ENCODE measurements at regions of chr14 and their contacts with region 1.

Region 1: DNA sequence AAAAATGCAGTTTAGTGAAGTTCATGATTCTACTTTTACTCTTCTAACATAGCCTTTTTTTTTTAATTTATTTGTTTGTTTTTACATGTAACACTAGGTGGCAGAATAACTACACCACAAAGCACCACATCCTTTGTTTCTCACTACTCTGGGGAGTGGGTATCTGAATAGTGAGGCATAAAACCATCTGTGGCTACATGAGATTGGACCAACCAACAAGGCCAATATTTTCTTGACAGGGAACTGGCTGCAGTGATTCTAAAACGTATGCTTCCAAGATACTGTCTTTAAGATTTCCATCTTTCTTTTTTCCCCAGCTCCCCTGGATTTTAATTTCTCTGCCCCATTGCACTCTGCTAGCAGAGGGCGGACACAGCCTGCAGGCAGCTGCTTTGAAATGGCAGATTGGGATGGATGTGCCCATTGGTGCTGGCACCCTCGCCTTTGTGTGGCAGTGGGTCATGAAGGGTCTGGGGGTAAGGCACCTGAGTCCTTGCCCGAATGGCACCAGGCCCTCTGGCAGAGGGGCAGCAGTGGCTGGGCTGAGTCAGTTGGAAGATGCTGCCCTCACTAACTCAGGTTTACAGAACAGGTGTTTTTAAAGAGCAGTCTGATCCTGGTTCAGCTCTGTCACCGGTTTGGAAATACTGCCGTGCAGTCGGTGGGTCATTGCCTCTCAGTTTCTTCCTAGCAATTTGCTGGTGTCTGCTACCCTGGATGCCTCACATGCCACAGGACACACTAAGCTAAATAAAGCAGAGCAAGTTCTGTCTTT is 429.1 kb downstream of the RAD51B start:
- DNase-seq: peak in 5 of 6 donors; percentile 37 to 61 (median 46)
- ATAC-seq: peak; percentile 68 to 83 (median 81)
- H3K4me3 ChIP-seq: no peak overlapping the region
- H3K27ac ChIP-seq: peak overlapping the region; percentile 6 to 88 (median 50)
- H3K4me1 ChIP-seq: peaks cover 40 to 72% (median 41%) of the 10 kb centered on the region in 3 donors
- H3K27me3 ChIP-seq: no peaks in the 10 kb centered on the region
- CTCF ChIP-seq: peak; percentile 22 to 38 (median 32)

Region 2: GRCh38 chr14:67763158-67763788 is 485.4 kb before region 1 on chr14:
- intact Hi-C with region 1: no loop called
- DNase-seq: no peak
- ATAC-seq: peak in 1 of 4 donors; percentile 49
- H3K4me3 ChIP-seq: no peak overlapping the region
- H3K27ac ChIP-seq: no peak overlapping the region
- H3K4me1 ChIP-seq: no peaks in the 10 kb centered on the region
- H3K27me3 ChIP-seq: no peaks in the 10 kb centered on the region
- CTCF ChIP-seq: no peak

Region 3: DNA sequence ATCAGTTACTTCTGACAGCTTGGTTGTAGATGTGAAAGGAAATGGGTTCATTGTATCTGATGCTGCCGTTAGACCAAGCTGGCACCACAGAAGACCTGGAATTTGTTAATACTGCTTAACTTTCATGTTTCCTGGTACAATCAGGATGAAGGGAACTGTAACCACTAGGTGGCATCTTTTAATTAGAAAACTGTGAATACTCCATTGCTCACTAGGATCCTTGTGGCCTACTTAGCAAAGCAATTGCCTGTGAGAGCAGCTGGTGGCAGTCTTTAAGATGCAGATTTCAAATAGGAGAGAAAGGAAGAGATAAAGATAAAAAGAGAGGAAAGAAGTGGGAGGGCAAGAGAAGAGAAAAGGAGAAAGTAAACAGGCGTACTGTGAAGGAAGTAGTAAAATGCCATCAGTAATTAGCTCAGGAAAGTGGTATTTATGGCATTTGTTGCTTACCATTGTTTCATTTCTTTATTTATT is 314.6 kb before region 1 on chr14:
- intact Hi-C with region 1: loop called in 1 of 3 experiments (anchors 10 kb)
- DNase-seq: peak in 3 of 6 donors; percentile 18 to 34 (median 23)
- ATAC-seq: peak; percentile 94 to 99 (median 98)
- H3K4me3 ChIP-seq: no peak overlapping the region
- H3K27ac ChIP-seq: no peak overlapping the region
- H3K4me1 ChIP-seq: peaks cover 0 to 6% (median 5%) of the 10 kb centered on the region in 3 donors
- H3K27me3 ChIP-seq: no peaks in the 10 kb centered on the region
- CTCF ChIP-seq: peak; percentile 37 to 62 (median 52)

Region 4: DNA sequence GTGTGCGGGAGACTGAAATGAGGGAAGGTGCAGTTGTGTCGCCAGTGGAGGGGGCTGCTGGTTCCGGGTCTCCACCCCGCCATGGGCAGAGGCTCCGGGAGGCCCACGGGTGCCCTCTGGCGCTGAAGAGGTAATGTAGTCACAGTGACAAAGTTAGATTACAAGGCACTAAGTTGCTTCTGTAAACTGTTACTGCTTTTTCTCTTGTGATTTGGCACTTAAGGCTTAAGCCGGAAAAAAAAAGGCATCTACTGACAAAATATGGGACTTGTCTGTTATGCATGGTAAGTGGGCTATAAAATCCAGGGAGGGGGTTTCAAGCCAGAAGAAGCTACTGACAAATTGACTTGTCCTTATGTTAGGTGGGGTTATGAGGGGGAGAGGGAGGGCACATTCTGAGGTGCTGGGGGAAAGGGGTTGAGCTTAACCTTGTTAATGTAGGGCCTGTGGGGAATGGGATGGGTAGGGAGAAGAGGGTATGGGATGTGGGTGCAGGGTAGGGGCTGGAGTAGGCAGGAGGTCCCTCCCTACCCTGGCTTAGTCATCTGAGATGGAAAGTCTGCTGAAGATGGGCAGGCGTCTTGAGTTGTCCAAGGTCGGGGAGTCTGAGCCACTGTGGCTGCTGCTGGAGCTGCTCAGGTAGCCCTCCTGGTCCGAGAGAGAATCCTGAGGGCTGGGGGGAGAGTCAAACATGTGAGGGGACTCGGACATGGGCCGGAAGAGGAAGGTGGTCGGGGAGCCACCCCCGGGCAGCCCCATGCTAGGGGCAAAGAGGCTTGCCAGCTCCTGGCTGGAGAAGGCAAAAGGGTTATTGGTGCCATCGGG is 540.5 kb after region 1 on chr14:
- intact Hi-C with region 1: loop called in 2 of 3 experiments (anchors 5 to 10 kb)
- DNase-seq: peak; percentile 79 to 91 (median 85)
- ATAC-seq: peak in 3 of 4 donors; percentile 5 to 13 (median 8)
- H3K4me3 ChIP-seq: peak overlapping the region; percentile 73 to 85 (median 78)
- H3K27ac ChIP-seq: peak overlapping the region; percentile 99 to 100 (median 99)
- H3K4me1 ChIP-seq: peaks cover 22 to 31% (median 25%) of the 10 kb centered on the region in 3 donors
- H3K27me3 ChIP-seq: no peaks in the 10 kb centered on the region
- CTCF ChIP-seq: peak in 3 of 4 donors; percentile 19 to 44 (median 28)

Region 5: GRCh38 chr14:68816262-68816942 is 567.7 kb after region 1 on chr14:
- intact Hi-C with region 1: loop called in 1 of 3 experiments (anchors 10 kb)
- DNase-seq: peak; percentile 89 to 96 (median 92)
- ATAC-seq: peak; percentile 90 to 93 (median 93)
- H3K4me3 ChIP-seq: peak overlapping the region; percentile 3 to 50 (median 34)
- H3K27ac ChIP-seq: peak overlapping the region; percentile 96 to 97 (median 96)
- H3K4me1 ChIP-seq: peaks cover 14 to 27% (median 26%) of the 10 kb centered on the region in 3 donors
- H3K27me3 ChIP-seq: no peaks in the 10 kb centered on the region
- CTCF ChIP-seq: peak; percentile 93 to 98 (median 96)

Measured in pancreas (tissue), 10 donors.